Activated B cell treated with CpG ODN at 0.5 μM for 24 hours (primary cell): ENCODE measurements at regions of chr3 and their contacts with region 1.

Region 1: DNA sequence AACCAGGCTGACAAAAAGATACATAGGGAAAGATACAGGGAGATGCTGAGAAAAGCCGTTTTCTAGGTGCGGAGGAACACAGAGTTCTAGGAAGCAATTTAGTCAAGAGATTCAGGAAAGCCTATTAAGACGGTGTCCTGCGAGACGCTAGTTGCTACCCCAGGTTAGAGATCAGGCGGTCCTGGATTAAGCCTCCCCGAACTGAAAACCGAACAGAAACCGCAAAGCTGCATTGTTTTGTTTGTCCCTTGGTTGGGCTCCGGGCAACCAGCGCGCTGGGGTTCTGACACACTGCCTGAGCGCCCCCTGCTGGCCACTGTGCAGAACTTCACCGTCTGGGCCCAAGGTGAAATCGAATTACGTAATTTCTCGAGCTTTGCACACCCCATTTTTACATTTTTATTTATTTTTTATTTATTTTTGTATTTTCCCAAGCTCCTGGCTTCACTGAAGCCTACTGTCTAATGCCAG is 37.3 kb upstream of the NDUFB4 start:
- DNase-seq: peak; percentile 74
- ATAC-seq: peak; percentile 86
- H3K4me3 Mint-ChIP-seq: peak overlapping the region; percentile 79
- H3K27ac Mint-ChIP-seq: peak overlapping the region; percentile 67
- H3K4me1 Mint-ChIP-seq: peaks cover 14% of the 10 kb centered on the region
- H3K27me3 Mint-ChIP-seq: peaks cover 18% of the 10 kb centered on the region
- CTCF ChIP-seq: peak; percentile 84

Region 2: DNA sequence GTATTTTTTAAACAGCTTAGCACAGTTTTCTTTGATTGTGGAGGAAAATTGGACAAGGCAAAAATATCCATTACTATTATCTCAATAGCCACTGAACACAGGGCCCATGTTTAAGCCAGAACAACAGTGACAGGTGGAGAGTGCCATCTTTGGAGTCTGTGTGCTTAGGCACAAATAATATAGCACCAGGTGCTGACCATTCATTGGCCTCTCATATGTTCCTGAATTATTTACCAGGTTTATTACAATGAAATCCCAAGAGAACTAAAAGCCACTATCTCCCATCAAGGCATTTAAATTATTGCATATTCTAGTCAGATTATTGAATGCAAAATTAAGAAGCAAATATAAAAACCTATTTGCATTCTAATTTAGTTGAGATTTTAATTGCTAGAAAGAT is 313.4 kb before region 1 on chr3:
- CTCF ChIA-PET with region 1: interaction called, 35 read pairs
- POLR2A ChIA-PET with region 1: no interaction called
- intact Hi-C with region 1: loop called (anchors 1 kb)
- DNase-seq: no peak
- ATAC-seq: no peak
- H3K4me3 Mint-ChIP-seq: no peak overlapping the region
- H3K27ac Mint-ChIP-seq: no peak overlapping the region
- H3K4me1 Mint-ChIP-seq: no peaks in the 10 kb centered on the region
- H3K27me3 Mint-ChIP-seq: peaks cover 22% of the 10 kb centered on the region
- CTCF ChIP-seq: no peak

Region 3: DNA sequence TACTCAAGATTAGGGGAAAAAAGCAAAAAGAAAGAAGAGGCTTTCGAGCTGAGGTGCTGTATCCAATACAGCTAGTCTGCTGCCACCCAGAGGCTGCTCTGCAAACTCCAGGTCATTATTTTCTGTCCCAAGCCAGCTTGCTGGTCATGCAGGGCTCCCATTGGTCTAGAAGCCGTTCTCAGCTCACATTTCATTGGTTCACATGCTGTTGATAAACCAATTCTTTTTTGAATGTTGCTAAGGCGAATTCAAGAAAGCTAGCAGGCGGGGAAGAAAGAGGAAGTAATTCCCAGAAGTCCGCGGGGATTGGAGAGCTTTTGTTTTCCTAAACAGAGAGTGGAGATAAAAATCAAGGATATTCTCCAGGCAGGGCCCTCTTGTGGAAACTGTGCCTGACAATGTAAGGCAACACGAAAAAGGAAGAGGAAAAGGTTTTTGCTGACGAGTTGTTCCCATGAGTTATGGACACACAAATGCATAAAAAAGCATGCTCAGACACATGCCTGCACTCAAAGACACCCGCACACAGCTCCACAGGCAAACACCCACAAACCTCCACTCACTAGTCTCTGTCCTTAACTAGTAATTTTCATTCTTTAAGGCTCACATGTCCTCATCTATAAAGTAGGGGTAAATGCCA is 141.4 kb before region 1 on chr3:
- CTCF ChIA-PET with region 1: interaction called, 22 read pairs
- POLR2A ChIA-PET with region 1: no interaction called
- intact Hi-C with region 1: loop called (anchors 1 kb)
- DNase-seq: peak; percentile 61
- ATAC-seq: peak; percentile 100
- H3K4me3 Mint-ChIP-seq: peak overlapping the region; percentile 83
- H3K27ac Mint-ChIP-seq: peak overlapping the region; percentile 37
- H3K4me1 Mint-ChIP-seq: peaks cover 16% of the 10 kb centered on the region
- H3K27me3 Mint-ChIP-seq: no peaks in the 10 kb centered on the region
- CTCF ChIP-seq: no peak

Region 4: DNA sequence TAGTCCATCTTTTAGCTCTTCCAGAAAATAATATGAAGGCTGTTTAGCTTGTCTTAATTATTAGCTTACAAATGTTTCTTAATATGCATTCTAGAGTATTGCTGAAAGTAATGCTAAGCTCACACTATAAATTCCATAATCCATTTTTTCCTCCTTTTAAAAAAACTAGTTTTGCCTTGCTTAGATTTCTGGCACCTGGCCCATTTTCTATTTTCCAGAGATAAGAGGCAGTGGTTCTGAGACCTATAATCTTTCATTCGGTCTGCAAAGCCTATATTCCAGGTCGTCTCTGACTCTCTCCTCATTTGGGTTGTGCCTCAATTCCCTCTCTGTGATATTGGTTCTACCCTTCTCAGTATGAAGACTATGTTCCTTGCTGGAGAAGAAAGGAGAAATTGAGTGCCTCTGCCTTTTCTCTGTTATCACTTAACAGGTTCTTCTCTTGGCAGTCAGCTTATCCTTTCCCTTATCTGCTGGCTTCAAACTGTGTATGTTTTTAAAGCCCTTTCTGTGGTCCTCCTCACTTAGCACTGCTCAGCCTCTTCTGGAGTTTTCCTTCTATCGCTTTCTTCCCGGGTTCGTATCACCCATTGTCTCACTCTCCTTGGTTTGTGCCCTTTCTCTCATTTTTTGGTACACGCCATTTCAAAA is 42.8 kb before region 1 on chr3:
- CTCF ChIA-PET with region 1: no interaction called
- POLR2A ChIA-PET with region 1: no interaction called
- intact Hi-C with region 1: loop called (anchors 1 kb)
- DNase-seq: no peak
- ATAC-seq: no peak
- H3K4me3 Mint-ChIP-seq: no peak overlapping the region
- H3K27ac Mint-ChIP-seq: no peak overlapping the region
- H3K4me1 Mint-ChIP-seq: no peaks in the 10 kb centered on the region
- H3K27me3 Mint-ChIP-seq: peaks cover 14% of the 10 kb centered on the region
- CTCF ChIP-seq: no peak

Region 5: DNA sequence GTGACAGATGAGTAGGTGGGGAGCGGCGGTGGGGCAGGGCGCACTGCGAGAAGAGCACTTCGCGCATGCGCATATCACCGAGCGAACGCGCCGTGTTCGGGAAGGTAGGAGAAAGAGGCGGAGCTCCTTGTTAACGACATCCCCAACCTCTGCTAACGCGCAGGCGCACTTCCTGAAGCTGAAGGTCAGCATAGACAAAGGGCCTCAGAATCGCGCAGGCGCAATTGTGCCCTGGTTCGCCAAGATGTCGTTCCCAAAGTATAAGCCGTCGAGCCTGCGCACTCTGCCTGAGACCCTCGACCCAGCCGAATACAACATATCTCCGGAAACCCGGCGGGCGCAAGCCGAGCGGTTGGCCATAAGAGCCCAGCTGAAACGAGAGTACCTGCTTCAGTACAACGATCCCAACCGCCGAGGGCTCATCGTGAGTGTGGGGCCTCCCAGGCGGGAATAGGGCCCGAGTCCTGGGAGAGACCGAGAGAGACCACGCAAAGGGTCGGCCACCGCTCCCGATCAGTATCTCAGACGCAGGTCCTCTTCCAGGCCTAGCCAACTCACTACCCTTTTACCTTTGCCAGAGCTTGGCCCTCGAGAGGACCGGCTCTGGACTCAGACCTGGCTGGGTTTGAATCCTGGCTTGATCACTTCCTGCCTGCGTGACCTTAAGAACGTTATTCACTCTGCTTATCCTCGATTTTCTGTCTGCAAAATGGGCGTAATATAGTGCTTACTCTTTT is 37.5 kb after region 1 on chr3 and contains the start of gene NDUFB4:
- CTCF ChIA-PET with region 1: interaction called, 5 read pairs
- POLR2A ChIA-PET with region 1: interaction called, 7 read pairs
- intact Hi-C with region 1: loop called (anchors 1 kb)
- DNase-seq: peak; percentile 82
- ATAC-seq: peak; percentile 96
- H3K4me3 Mint-ChIP-seq: peak within 1 kb of the TSS; percentile 96
- H3K27ac Mint-ChIP-seq: peak within 1 kb of the TSS; percentile 94
- H3K4me1 Mint-ChIP-seq: peaks cover 11% of the 10 kb centered on the region
- H3K27me3 Mint-ChIP-seq: peaks cover 2% of the 10 kb centered on the region
- CTCF ChIP-seq: no peak
- total RNA-seq, gene NDUFB4: 80.4 and 86.3 TPM in 2 replicates

Region 6: GRCh38 chr3:120642368-120642948 is 83.7 kb after region 1 on chr3:
- CTCF ChIA-PET with region 1: no interaction called
- POLR2A ChIA-PET with region 1: no interaction called
- intact Hi-C with region 1: no loop called
- DNase-seq: no peak
- ATAC-seq: no peak
- H3K4me3 Mint-ChIP-seq: no peak overlapping the region
- H3K27ac Mint-ChIP-seq: no peak overlapping the region
- H3K4me1 Mint-ChIP-seq: no peaks in the 10 kb centered on the region
- H3K27me3 Mint-ChIP-seq: peaks cover 1% of the 10 kb centered on the region
- CTCF ChIP-seq: no peak

Region 7: GRCh38 chr3:120795017-120795648 is 236.3 kb after region 1 on chr3:
- CTCF ChIA-PET with region 1: interaction called, 97 read pairs
- POLR2A ChIA-PET with region 1: no interaction called
- intact Hi-C with region 1: loop called (anchors 1 kb)
- DNase-seq: peak; percentile 53
- ATAC-seq: peak; percentile 96
- H3K4me3 Mint-ChIP-seq: no peak overlapping the region
- H3K27ac Mint-ChIP-seq: no peak overlapping the region
- H3K4me1 Mint-ChIP-seq: no peaks in the 10 kb centered on the region
- H3K27me3 Mint-ChIP-seq: no peaks in the 10 kb centered on the region
- CTCF ChIP-seq: no peak

Region 8: DNA sequence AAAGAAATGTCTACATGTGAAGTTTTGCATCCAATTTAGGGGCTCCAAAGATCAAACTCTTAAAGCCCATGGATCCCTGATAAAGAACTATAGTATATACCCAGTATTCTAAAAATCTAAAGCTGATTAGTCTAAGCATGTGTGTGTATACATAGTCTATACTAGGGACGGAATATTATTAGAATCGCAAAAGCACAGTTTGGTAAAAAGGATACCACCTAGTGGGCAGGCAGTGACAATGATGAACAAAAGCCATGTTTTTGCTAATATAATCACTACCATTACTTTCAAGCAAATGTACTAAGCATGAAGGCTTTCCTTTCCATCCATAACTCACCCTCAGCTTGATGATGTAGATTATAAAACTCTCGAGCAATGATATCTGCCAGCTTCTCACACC is 970.5 kb after region 1 on chr3:
- CTCF ChIA-PET with region 1: no interaction called
- POLR2A ChIA-PET with region 1: no interaction called
- intact Hi-C with region 1: loop called (anchors 2 kb)
- DNase-seq: no peak
- ATAC-seq: no peak
- H3K4me3 Mint-ChIP-seq: no peak overlapping the region
- H3K27ac Mint-ChIP-seq: no peak overlapping the region
- H3K4me1 Mint-ChIP-seq: no peaks in the 10 kb centered on the region
- H3K27me3 Mint-ChIP-seq: no peaks in the 10 kb centered on the region
- CTCF ChIP-seq: no peak